Body of pancreas (tissue), 4 donors: ENCODE measurements at regions of chr1 and their contacts with region 1.

Region 1: GRCh38 chr1:235328357-235329138 is at the start of gene GGPS1:
- DNase-seq: peak; percentile 98 to 99 (median 98)
- ATAC-seq: peak; percentile 90
- H3K4me3 ChIP-seq: peak within 1 kb of the TSS; percentile 89 to 93
- H3K27ac ChIP-seq: peak within 1 kb of the TSS; percentile 91 to 96 (median 93)
- H3K4me1 ChIP-seq: peaks cover 62% of the 10 kb centered on the region
- H3K27me3 ChIP-seq: no peaks in the 10 kb centered on the region
- CTCF ChIP-seq: peak in 4 of 7 experiments; percentile 7 to 33 (median 14)
- POLR2A ChIP-seq: peak; percentile 61 to 93 (median 74)
- total RNA-seq, gene GGPS1: 11.9 to 15.3 TPM

Region 2: DNA sequence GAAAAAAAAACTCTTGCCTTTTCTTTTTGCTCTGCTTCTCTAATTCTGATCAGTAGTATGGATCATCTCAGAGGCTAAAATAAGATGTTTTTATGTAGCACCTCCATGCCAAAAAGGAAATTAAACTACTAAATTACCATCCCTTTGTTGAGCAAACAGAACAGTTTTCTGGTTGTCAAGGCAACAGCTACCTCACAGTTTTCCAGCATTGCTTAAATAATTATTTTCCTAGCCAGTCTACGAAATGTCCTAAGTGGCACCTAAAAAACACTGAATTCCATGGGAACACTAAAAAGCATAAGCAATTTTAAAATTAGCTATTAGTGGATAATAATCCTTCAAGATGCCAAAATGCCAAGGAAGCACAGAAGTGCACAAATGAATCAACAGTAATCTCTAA is 62.2 kb before region 1 on chr1:
- intact Hi-C with region 1: loop called (anchors 10 kb)
- DNase-seq: no peak
- ATAC-seq: peak; percentile 47
- H3K4me3 ChIP-seq: no peak overlapping the region
- H3K27ac ChIP-seq: no peak overlapping the region
- H3K4me1 ChIP-seq: peaks cover 22% of the 10 kb centered on the region
- H3K27me3 ChIP-seq: no peaks in the 10 kb centered on the region
- CTCF ChIP-seq: no peak
- POLR2A ChIP-seq: no peak

Region 3: DNA sequence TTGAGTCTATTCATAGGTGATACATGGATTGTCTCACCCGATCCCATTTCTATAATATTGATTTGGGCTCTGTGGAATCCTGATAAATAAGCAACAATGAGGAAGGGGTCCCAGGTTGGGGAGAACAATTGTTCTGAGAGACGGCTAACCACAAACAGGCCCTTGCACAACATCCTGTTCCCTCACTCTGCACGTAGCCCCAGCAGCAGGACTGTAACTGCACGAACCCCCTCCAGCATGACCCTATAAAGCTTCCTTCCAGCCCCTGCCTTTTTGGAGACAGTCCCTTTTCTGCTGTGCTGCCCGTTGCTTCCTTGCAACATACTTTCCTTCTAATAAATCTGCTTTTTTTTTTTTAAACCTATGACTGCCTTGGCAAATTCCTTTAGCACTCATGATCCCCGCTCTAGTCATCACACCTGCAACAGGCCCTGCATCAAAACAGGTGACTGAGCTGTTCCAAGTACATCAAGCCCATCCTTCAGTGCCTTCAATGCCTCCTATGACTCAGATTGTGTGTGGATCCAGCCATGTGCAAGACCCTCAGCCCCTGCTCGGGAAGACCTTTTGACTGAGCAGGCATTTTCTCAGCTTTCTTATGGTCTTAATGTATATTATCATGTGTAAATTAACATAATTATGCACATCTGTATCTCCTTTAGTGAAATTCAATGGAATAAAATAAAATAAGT is 239.4 kb after region 1 on chr1:
- intact Hi-C with region 1: no loop called
- DNase-seq: peak in 1 of 4 donors; percentile 31
- ATAC-seq: no peak
- H3K4me3 ChIP-seq: no peak overlapping the region
- H3K27ac ChIP-seq: no peak overlapping the region
- H3K4me1 ChIP-seq: no peaks in the 10 kb centered on the region
- H3K27me3 ChIP-seq: no peaks in the 10 kb centered on the region
- CTCF ChIP-seq: no peak
- POLR2A ChIP-seq: no peak